Activated T-helper 2 cell treated with anti-CD3 and anti-CD28 coated beads, Interferon-gamma antibody, Interleukin-2, Interleukin-4, amounts not matched to agents 10 μg/mL and 5 μg/mL and 100 μg/mL, durations not matched to agents 14 hours and 24 hours and 36 hours (primary cell): ENCODE measurements at regions of chr6 and their contacts with region 1.

Region 1: DNA sequence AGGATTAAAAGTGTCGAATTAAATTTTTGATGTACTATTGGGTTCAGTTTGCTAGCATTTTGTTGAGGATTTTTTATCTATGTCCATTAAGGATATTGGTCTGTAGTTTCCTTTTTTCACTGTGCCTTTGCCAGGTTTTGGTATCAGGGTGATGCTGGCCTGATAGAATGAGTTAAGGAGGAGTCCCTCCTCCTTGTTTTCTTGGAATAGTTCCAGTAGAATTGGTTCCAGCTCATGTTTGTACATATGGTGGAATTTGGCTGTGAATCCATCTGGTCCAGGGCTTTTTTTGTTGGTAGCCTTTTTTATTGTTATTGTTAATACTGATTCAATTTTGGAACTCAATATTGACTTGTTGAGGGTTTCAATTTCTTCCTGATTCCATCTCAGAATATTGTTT is 141.8 kb downstream of the SIM1 start:
- DNase-seq: no peak
- H3K4me3 Mint-ChIP-seq: no peak overlapping the region
- H3K27ac Mint-ChIP-seq: no peak overlapping the region
- H3K4me1 Mint-ChIP-seq: no peaks in the 10 kb centered on the region
- H3K27me3 Mint-ChIP-seq: peaks cover 6% of the 10 kb centered on the region

Region 2: GRCh38 chr6:100257793-100258395 is 65.0 kb before region 1 on chr6:
- intact Hi-C with region 1: loop called (anchors 10 kb)
- DNase-seq: no peak
- H3K4me3 Mint-ChIP-seq: peak overlapping the region; percentile 54
- H3K27ac Mint-ChIP-seq: no peak overlapping the region
- H3K4me1 Mint-ChIP-seq: peaks cover 18% of the 10 kb centered on the region
- H3K27me3 Mint-ChIP-seq: peaks cover 5% of the 10 kb centered on the region